Tibial artery (tissue), 4 donors: ENCODE measurements at regions of chr5 and their contacts with region 1.

Region 1: DNA sequence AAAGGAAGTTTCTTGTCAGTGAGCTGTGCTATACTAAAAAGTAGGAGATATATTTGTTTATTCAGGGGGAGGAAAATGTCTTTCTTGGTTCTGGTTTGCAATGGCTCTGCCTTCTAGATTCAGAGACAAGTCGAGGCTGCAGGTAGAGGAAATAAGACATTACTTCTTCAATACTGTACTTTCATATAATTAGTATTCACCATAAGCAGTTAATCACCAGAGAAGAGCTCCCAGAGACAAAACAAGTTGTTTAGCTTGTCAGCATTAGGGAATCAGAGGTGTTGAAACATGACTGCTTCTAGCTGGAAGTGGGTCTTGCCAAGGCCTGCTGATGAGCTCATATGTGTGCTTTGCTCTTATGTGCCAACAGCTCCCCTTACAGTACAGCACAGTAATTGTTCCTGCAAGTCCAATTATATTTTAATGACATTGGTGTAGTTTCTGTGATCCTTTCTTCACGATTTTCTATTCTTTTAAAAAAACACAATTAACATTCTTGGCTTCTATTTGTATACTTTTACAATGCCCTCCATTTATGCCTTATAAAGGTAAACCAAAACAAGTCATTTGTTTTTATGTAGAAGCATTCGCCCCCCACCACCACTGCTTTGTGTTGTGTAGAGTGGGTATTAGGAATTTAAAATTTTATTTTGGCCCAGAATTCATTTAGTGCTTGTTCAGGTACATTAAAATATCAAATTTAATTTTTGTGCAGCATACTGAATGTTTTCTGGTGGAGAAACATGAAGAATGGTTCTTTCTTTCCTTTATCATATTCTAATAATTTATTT is 112.2 kb downstream of the RPS23 start:
- DNase-seq: peak; percentile 82 to 84
- H3K4me3 ChIP-seq: no peak overlapping the region
- H3K27ac ChIP-seq: peak overlapping the region in 1 of 2 donors; percentile 3
- H3K4me1 ChIP-seq: peaks cover 0 to 24% (median 14%) of the 10 kb centered on the region in 4 donors
- H3K27me3 ChIP-seq: no peaks in the 10 kb centered on the region
- CTCF ChIP-seq: peak; percentile 77 to 83

Region 2: GRCh38 chr5:81506900-81507588 is 658.9 kb before region 1 on chr5:
- intact Hi-C with region 1: loop called (anchors 2 kb)
- DNase-seq: peak; percentile 71 to 76
- H3K4me3 ChIP-seq: no peak overlapping the region
- H3K27ac ChIP-seq: peak overlapping the region; percentile 41 to 51
- H3K4me1 ChIP-seq: peaks cover 0 to 23% (median 4%) of the 10 kb centered on the region in 4 donors
- H3K27me3 ChIP-seq: no peaks in the 10 kb centered on the region
- CTCF ChIP-seq: peak; percentile 83 to 91

Region 3: DNA sequence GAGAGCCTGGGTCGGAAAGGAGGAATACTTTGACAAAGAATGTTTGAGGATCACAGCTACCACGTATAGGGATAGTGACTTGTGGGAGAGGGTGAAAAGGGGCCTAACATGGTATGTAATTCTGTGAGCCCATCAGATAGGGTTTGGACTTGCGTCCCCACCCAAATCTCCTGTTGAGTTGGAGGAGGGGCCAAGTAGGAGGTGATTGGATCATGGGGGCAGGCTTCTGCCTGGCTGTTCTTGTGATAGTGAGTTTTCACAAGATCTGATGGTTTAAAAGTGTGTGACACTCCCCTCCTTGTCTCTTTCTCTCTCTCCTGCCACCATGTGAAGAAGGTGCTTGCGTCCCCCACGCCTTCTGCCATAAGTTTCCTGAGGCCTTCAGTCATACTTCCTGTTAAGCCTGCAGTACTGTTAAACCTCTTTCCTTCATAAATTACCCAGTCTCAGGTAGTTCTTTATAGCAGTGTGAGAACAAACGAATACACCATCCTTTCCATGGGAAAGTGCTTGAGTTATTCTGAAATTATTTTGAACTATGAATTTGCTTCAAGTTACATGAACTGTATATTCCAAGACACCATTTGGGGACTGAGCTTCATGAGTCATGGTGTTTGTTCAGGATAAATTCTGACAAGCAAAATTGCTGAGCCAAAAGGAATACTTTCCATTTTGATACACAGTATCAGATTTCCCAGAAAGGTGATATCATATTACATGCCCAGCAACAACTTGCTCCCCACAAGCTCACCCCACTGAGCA is 346.2 kb before region 1 on chr5:
- intact Hi-C with region 1: no loop called
- DNase-seq: no peak
- H3K4me3 ChIP-seq: no peak overlapping the region
- H3K27ac ChIP-seq: no peak overlapping the region
- H3K4me1 ChIP-seq: peaks cover 0 to 12% (median 2%) of the 10 kb centered on the region in 4 donors
- H3K27me3 ChIP-seq: no peaks in the 10 kb centered on the region
- CTCF ChIP-seq: no peak